Ascending aorta (tissue), 2 donors: ENCODE measurements at regions of chr12 and their contacts with region 1.

Region 1: GRCh38 chr12:2884810-2885209 is 5.9 kb upstream of the TULP3 start:
- DNase-seq: no peak
- H3K4me3 ChIP-seq: no peak overlapping the region
- H3K27ac ChIP-seq: no peak overlapping the region
- H3K4me1 ChIP-seq: no peaks in the 10 kb centered on the region
- H3K27me3 ChIP-seq: no peaks in the 10 kb centered on the region
- CTCF ChIP-seq: no peak

Region 2: DNA sequence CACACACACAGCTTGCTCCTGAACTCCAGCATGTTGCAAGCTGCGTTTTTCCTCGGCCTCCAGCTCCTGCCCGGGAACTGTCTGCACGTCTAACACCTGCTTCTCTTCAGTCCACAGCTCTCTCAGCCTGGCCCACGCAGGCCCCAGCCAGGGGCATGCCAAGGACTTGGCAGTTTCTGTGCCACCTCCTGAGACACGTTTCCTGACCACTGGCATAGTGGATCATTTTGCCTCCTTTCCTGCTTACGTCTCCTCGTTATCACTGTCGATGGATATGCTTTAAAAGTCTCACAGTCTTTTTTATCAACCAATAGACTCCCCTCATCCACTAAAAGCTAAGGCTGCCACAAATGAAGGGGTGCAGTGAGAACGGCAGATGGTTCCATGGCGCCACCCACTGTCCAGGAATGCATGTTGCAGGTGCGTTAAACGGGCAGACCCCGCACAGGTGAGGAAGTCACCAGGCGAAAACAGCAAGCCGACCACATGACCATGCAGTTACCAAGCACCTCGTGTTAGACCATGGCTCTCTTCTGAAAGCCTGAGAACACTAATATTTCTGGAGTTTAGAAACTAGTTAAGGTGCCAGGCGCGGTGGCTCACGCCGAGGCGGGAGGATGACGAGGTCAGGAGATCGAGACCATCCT is 59.7 kb after region 1 on chr12:
- intact Hi-C with region 1: loop called (anchors 5 kb)
- DNase-seq: no peak
- H3K4me3 ChIP-seq: no peak overlapping the region
- H3K27ac ChIP-seq: no peak overlapping the region
- H3K4me1 ChIP-seq: no peaks in the 10 kb centered on the region
- H3K27me3 ChIP-seq: no peaks in the 10 kb centered on the region
- CTCF ChIP-seq: peak; percentile 57 to 72 (median 62)

Region 3: DNA sequence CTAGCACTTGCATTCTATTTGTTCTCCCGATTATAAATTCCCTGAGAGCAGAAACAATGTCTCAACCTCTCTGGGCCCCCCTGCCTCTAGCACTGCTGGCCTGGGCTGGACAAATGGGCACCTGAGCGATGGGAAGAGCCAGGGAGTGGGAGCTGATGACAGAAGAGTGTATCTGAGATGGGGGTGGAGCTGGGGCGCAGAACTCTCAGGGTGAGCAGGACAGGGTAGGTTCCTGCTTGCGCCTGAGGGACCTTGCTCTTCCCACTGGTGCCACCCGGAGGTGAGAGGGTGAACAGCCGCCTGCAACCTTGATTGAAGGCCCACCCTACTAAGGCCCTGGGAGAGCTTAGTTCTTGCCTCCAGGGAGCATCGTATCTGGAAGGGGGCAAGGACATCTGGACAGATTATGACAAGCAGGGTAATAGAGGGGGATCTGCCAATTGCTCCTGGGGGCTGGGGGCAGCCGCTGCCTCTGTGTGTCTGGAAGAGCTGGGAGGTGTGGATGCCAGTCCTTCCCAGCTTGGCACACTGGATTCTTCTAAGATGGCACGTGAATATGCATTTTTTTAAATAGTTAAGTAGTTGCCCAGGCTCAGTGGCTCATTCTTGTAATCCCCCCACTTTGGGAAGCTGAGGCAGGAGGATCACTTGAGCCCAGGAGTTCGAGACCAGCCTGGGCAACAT is 149.4 kb after region 1 on chr12:
- intact Hi-C with region 1: loop called (anchors 1 kb)
- DNase-seq: no peak
- H3K4me3 ChIP-seq: no peak overlapping the region
- H3K27ac ChIP-seq: no peak overlapping the region
- H3K4me1 ChIP-seq: no peaks in the 10 kb centered on the region
- H3K27me3 ChIP-seq: no peaks in the 10 kb centered on the region
- CTCF ChIP-seq: peak; percentile 53 to 70 (median 62)